ENCODE measurements at regions of chr18 and their contacts with region 1.

Region 1: GRCh38 chr18:9949315-9949714 is 35.5 kb downstream of the VAPA start:
- DNase-seq: no peak
- H3K4me3 ChIP-seq: no peak overlapping the region
- H3K27ac ChIP-seq: no peak overlapping the region
- H3K4me1 ChIP-seq: peaks cover 37% of the 10 kb centered on the region
- H3K27me3 ChIP-seq: no peaks in the 10 kb centered on the region
- CTCF ChIP-seq: no peak

Region 2: GRCh38 chr18:9987931-9988330 is 38.6 kb after region 1 on chr18:
- CTCF ChIA-PET with region 1: no interaction called
- POLR2A ChIA-PET with region 1: no interaction called
- intact Hi-C with region 1: no loop called
- DNase-seq: no peak
- H3K4me3 ChIP-seq: no peak overlapping the region
- H3K27ac ChIP-seq: no peak overlapping the region
- H3K4me1 ChIP-seq: no peaks in the 10 kb centered on the region
- H3K27me3 ChIP-seq: no peaks in the 10 kb centered on the region
- CTCF ChIP-seq: no peak

Region 3: DNA sequence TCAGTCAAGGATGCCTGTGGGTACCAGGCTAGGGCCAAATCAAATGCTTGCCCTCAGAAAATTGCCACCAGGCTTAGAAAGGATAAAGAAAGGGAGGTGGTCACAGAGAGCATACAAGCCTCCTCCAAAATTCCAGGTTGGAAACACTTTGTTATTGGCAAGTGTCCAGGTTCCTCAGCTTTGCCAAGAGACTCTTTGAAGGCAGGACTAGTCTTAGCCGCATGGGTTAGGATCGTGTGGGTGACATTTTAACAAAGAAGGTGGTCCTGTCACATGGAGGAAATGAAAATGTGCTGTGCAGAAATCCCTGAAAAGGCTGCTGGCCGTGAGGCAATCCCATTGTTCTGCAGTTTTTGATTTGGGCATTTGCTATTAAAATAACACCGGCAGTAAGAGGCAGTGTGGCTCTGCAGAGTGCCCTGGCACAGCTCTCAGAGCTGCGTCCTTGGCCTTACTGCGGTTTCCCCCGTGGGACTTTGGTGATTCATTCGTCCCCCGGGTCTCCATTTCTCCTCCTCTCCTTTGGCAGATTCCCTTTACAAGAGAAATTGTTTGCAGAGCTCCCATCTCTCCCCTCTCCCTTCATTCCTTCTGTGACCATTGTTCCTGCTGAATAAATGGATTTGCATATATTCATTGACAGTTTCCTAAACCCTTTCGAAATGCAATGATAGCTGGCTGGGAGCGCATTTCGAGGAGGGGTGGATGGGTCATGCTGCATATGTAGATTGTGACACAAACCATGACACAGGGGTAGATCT is 151.8 kb after region 1 on chr18:
- CTCF ChIA-PET with region 1: no interaction called
- POLR2A ChIA-PET with region 1: interaction called, 16 read pairs
- intact Hi-C with region 1: no loop called
- DNase-seq: peak; percentile 91
- H3K4me3 ChIP-seq: peak overlapping the region; percentile 7
- H3K27ac ChIP-seq: peak overlapping the region; percentile 47
- H3K4me1 ChIP-seq: peaks cover 22% of the 10 kb centered on the region
- H3K27me3 ChIP-seq: no peaks in the 10 kb centered on the region
- CTCF ChIP-seq: peak; percentile 28; the same call in 1 of the 2 replicates

Measured in A673 (cell line).